ENCODE measurements at regions of chr17 and their contacts with region 1.

Region 1: DNA sequence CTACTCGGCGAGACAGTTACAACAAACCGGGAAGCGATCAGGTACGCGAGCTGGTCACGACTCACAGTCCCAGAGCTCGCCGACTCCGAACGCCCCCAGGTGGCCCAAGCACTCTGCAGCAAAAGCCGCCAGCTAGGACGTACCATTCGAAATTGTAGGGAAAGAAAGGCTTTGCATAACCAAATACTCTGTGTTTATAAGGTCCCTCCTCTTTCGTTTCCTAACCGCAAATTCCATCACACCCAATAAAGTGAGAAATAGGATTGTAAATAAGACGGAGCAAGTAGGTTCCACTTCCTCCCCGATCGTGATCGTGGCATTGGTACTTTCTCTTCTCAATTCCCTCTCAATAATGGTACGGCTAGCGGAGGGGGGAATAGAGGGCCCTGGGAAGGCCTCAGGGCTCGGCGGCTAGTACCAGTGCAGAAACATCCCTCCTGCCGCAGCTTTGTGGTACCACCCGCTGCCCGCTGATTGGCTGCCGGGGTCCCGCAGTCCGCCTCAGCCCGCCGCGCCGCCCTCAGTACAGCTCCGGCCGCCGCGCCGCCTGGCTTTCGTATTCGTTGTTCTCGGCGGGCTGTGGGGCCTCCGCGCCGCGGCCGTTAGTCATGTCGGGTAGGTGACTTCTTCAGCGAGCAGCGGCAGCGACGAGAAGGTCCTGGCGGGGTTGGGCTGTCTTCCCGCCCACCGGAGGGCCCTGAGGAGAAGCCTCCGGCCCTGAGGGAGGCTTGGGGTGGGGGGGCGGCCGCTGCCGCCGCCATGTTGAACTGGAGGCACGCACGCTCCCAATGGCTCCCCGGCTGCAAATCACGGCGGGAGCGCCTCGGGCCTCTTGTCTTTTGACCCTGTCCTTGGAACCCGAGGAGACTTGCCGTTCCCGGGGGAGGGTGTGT is at the start of gene TAF15:
- DNase-seq: peak; percentile 99
- H3K4me3 ChIP-seq: peak within 1 kb of the TSS; percentile 87 to 99 (median 93)
- H3K27ac ChIP-seq: peak within 1 kb of the TSS; percentile 94 to 97
- H3K4me1 ChIP-seq: peaks cover 13 to 52% (median 38%) of the 10 kb centered on the region in 4 experiments
- H3K27me3 ChIP-seq: no peaks in the 10 kb centered on the region

Region 2: GRCh38 chr17:35819456-35819855 is 10.2 kb after region 1 on chr17:
- CTCF ChIA-PET with region 1: interaction called, 16 read pairs
- POLR2A ChIA-PET with region 1: interaction called, 4 read pairs
- DNase-seq: peak in 2 of 3 donors; percentile 30 to 34
- H3K4me3 ChIP-seq: no peak overlapping the region
- H3K27ac ChIP-seq: no peak overlapping the region
- H3K4me1 ChIP-seq: peaks cover 0 to 2% (median 0%) of the 10 kb centered on the region in 4 experiments
- H3K27me3 ChIP-seq: no peaks in the 10 kb centered on the region

Measured in common myeloid progenitor, CD34-positive (primary cell).